ENCODE measurements at regions of chr22 and their contacts with region 1.

Region 1: DNA sequence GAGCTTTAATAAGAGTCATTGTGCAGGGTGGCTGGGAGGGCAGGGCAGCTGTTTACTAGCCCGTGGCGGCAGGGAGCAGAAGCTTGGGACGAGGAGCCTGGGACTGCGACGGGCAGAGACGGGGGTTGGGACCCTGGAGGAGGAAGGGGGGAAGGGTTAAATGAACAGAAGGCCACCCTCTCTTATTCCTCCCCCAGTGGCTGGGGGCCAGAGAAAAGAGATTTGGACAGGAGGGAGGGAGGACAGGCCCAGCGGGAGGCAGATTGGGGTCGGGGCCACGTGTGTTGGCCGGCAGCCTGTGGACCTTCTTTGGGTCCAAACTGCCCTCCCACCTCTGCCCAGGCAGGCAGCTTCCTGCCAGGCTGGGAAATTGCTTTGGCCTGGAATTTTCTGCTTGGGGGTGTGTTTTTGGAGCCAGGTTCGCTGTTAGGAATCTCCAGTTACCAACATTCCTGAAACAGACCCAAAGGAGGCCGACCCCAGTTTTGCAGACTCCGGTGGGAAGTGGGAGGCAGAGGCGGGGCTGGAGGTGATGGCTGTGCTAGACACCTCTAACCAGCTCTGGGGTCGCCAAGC is 50.2 kb downstream of the APOL3 start:
- DNase-seq: peak in 1 of 2 donors; percentile 73
- H3K4me3 ChIP-seq: no peak overlapping the region
- H3K27ac ChIP-seq: peak overlapping the region; percentile 78 to 85
- H3K4me1 ChIP-seq: peaks cover 0 to 4% of the 10 kb centered on the region in 2 donors
- H3K27me3 ChIP-seq: no peaks in the 10 kb centered on the region
- CTCF ChIP-seq: no peak
- POLR2A ChIP-seq: no peak

Region 2: DNA sequence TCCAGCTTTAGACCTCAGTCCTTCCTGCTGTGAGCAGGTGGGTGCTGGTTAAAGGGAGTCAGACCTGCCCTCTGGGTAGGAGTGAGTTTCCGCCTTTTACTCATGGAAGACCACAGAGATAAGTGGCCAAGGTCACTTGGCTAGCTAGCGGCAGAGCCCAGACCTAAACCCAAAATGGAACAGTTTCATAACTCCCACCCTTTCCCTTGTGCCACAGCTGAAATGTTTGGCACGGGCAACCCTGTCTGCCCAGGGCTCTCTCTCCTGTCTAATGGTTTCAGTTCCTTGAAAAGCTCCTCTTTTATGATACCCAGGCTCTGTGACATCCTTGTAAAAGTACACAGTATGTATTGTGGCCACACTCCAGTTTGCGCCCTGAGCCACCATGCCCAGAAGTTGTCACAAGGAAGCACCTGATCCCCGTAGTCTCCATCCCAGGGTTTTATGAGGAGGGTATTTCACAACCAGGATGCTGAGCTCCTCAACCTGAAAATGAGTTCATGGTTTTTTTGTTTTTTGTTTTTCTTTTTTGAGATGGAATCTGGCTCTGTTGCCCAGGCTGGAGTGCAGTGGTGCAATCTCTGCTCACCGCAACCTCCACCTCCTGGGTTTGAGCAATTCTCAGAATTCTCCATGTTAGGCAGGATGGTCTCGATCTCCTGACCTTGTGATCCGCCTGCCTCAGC is 498.4 kb before region 1 on chr22:
- intact Hi-C with region 1: loop called (anchors 10 kb)
- DNase-seq: peak in 1 of 2 donors; percentile 58
- H3K4me3 ChIP-seq: no peak overlapping the region
- H3K27ac ChIP-seq: peak overlapping the region; percentile 48 to 61
- H3K4me1 ChIP-seq: no peaks in the 10 kb centered on the region
- H3K27me3 ChIP-seq: no peaks in the 10 kb centered on the region
- CTCF ChIP-seq: no peak
- POLR2A ChIP-seq: no peak

Region 3: GRCh38 chr22:36901411-36902142 is 791.2 kb after region 1 on chr22:
- intact Hi-C with region 1: no loop called
- DNase-seq: no peak
- H3K4me3 ChIP-seq: no peak overlapping the region
- H3K27ac ChIP-seq: peak overlapping the region; percentile 52 to 60
- H3K4me1 ChIP-seq: no peaks in the 10 kb centered on the region
- H3K27me3 ChIP-seq: no peaks in the 10 kb centered on the region
- CTCF ChIP-seq: no peak
- POLR2A ChIP-seq: no peak